Panc1 (cell line): ENCODE measurements at regions of chr1 and their contacts with region 1.

Region 1: DNA sequence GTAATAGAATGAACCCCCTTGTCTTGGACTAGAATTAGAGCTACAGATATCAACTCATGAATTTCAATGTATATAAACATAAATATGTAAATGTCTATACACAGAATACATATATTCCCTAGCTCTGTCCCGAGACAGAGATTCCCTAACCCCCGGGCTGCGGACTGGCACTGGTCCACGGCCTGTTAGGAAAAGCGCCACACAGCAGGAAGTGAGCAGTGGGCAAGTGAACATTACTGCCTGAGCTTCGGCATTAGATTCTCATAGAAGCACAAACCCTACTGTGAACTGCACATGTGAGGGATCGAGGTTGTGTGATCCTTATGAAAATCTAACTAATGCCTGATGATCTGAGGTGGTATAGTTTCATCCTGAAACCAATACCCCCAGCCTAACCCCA is 51.2 kb downstream of the PIK3R3 start:
- DNase-seq: no peak
- ATAC-seq: no peak
- H3K4me3 ChIP-seq: no peak overlapping the region
- H3K27ac ChIP-seq: no peak overlapping the region
- H3K4me1 ChIP-seq: no peaks in the 10 kb centered on the region
- H3K27me3 ChIP-seq: no peaks in the 10 kb centered on the region
- CTCF ChIP-seq: no peak

Region 2: GRCh38 chr1:46113948-46114347 is 32.7 kb after region 1 on chr1:
- CTCF ChIA-PET with region 1: no interaction called
- POLR2A ChIA-PET with region 1: interaction called, 17 read pairs
- in situ Hi-C with region 1: no loop called
- intact Hi-C with region 1: no loop called
- DNase-seq: no peak
- ATAC-seq: no peak
- H3K4me3 ChIP-seq: no peak overlapping the region
- H3K27ac ChIP-seq: no peak overlapping the region
- H3K4me1 ChIP-seq: peaks cover 4% of the 10 kb centered on the region; the same call in 1 of the 2 replicates
- H3K27me3 ChIP-seq: no peaks in the 10 kb centered on the region
- CTCF ChIP-seq: no peak